ENCODE measurements at regions of chr14 and their contacts with region 1.

Region 1: DNA sequence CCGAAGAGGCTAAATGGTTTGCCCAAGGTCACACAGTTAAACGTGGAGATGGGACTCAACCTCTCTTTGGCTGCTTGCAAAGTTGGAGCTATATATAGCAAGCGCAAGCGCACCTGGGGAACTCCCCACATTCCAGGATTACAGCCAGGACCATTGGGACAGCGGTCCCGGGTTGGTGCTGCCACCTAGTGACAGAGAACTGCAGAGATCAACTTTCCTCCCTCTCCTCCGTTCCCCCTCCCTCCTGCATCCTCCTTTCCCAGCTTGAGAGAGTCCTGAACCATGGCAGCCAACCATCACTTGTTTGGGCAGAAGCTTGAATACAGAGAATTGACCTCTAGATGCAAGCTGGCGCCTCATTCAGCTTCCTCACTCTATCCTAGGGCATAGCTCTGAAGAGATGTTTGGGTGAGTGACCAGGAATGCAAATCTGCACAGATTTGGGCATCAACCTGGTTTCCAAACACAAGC is 17.4 kb upstream of the FLVCR2 start:
- DNase-seq: peak; percentile 21 to 68 (median 33)
- H3K4me3 ChIP-seq: no peak overlapping the region
- H3K4me3 Mint-ChIP-seq: peak overlapping the region in 1 of 7 donors; percentile 33
- H3K27ac ChIP-seq: no peak overlapping the region
- H3K27ac Mint-ChIP-seq: peak overlapping the region in 4 of 8 donors; percentile 22 to 78 (median 46)
- H3K4me1 ChIP-seq: peaks cover 10% of the 10 kb centered on the region
- H3K4me1 Mint-ChIP-seq: peaks cover 14 to 33% (median 27%) of the 10 kb centered on the region in 3 donors
- H3K27me3 ChIP-seq: no peaks in the 10 kb centered on the region
- H3K27me3 Mint-ChIP-seq: peaks cover 0 to 1% of the 10 kb centered on the region in 2 donors

Region 2: GRCh38 chr14:75176142-75176820 is 384.7 kb before region 1 on chr14 and contains the start of gene TMED10:
- CTCF ChIA-PET with region 1: no interaction called
- POLR2A ChIA-PET with region 1: no interaction called
- DNase-seq: peak; percentile 87 to 95 (median 94)
- H3K4me3 ChIP-seq: peak within 1 kb of the TSS; percentile 87
- H3K4me3 Mint-ChIP-seq: peak within 1 kb of the TSS; percentile 86 to 98 (median 90)
- H3K27ac ChIP-seq: peak within 1 kb of the TSS; percentile 98
- H3K27ac Mint-ChIP-seq: peak within 1 kb of the TSS; percentile 97 to 100 (median 98)
- H3K4me1 ChIP-seq: peaks cover 24% of the 10 kb centered on the region
- H3K4me1 Mint-ChIP-seq: peaks cover 32 to 55% (median 53%) of the 10 kb centered on the region in 3 donors
- H3K27me3 ChIP-seq: no peaks in the 10 kb centered on the region
- H3K27me3 Mint-ChIP-seq: no peaks in the 10 kb centered on the region
- total RNA-seq, gene TMED10: 178 TPM

Region 3: DNA sequence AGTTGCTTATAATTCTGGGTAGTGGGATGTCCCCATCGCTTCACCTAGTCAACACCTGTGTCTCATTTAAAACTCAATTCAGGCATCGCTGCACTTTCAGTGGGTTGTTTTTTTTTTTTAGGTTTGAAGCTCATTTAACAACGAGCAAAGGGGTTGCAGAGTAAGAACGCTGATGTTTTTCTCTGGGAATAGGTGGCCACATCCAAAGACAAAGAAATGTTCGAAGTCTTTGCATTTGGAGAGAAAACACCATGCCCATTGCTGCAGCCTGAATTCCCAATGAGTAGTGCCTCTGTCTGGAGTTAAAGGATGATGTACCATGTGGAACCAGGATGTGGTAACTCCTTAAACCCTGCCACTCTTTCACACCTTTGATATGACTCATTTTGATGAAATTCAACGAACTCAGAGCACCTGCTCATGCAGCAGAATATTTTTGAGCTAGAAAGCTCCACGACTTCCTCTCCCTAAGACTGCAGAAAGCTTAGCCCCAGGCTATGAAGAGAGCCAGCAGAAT is 73.8 kb before region 1 on chr14:
- CTCF ChIA-PET with region 1: interaction called, 20 read pairs
- POLR2A ChIA-PET with region 1: no interaction called
- DNase-seq: peak in 1 of 5 donors; percentile 22
- H3K4me3 ChIP-seq: no peak overlapping the region
- H3K4me3 Mint-ChIP-seq: peak overlapping the region in 6 of 7 donors; percentile 4 to 65 (median 20)
- H3K27ac ChIP-seq: no peak overlapping the region
- H3K27ac Mint-ChIP-seq: peak overlapping the region in 5 of 8 donors; percentile 24 to 70 (median 36)
- H3K4me1 ChIP-seq: peaks cover 7% of the 10 kb centered on the region
- H3K4me1 Mint-ChIP-seq: peaks cover 12 to 24% (median 22%) of the 10 kb centered on the region in 3 donors
- H3K27me3 ChIP-seq: no peaks in the 10 kb centered on the region
- H3K27me3 Mint-ChIP-seq: peaks cover 0 to 1% of the 10 kb centered on the region in 2 donors

Region 4: DNA sequence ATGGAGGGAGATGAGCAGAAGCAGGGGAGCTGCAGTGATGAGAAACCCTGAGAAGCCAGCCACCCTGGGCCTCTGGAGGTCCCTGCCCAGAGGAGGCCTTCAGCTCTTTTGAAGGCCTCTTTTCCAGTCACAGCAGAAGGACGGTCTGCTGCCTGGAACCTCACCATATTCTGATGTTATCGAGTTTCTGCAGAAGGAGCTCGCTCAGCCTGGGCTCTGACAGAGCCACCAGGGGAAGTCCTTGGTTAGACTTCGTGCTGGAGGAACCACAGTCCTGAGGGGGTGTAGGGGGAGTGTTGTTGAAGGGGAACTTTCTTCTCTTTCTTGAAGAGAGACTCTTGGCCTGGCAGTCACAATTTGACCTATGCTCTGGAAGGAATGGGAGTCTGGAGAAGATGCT is 63.8 kb before region 1 on chr14:
- CTCF ChIA-PET with region 1: interaction called, 15 read pairs
- POLR2A ChIA-PET with region 1: no interaction called
- DNase-seq: peak in 1 of 5 donors; percentile 59
- H3K4me3 ChIP-seq: no peak overlapping the region
- H3K4me3 Mint-ChIP-seq: peak overlapping the region in 1 of 7 donors; percentile 45
- H3K27ac ChIP-seq: no peak overlapping the region
- H3K27ac Mint-ChIP-seq: peak overlapping the region in 5 of 8 donors; percentile 12 to 97 (median 70)
- H3K4me1 ChIP-seq: peaks cover 7% of the 10 kb centered on the region
- H3K4me1 Mint-ChIP-seq: peaks cover 7 to 35% (median 32%) of the 10 kb centered on the region in 3 donors
- H3K27me3 ChIP-seq: no peaks in the 10 kb centered on the region
- H3K27me3 Mint-ChIP-seq: no peaks in the 10 kb centered on the region

Region 5: GRCh38 chr14:75514673-75515628 is 46.0 kb before region 1 on chr14:
- CTCF ChIA-PET with region 1: interaction called, 43 read pairs
- POLR2A ChIA-PET with region 1: no interaction called
- DNase-seq: peak; percentile 33 to 77 (median 52)
- H3K4me3 ChIP-seq: peak overlapping the region; percentile 45
- H3K4me3 Mint-ChIP-seq: peak overlapping the region; percentile 83 to 99 (median 87)
- H3K27ac ChIP-seq: peak overlapping the region; percentile 62
- H3K27ac Mint-ChIP-seq: peak overlapping the region; percentile 92 to 100 (median 97)
- H3K4me1 ChIP-seq: peaks cover 28% of the 10 kb centered on the region
- H3K4me1 Mint-ChIP-seq: peaks cover 36 to 52% (median 49%) of the 10 kb centered on the region in 3 donors
- H3K27me3 ChIP-seq: no peaks in the 10 kb centered on the region
- H3K27me3 Mint-ChIP-seq: no peaks in the 10 kb centered on the region

Region 6: GRCh38 chr14:75522224-75522982 is 38.6 kb before region 1 on chr14 and contains the start of gene BATF:
- CTCF ChIA-PET with region 1: interaction called, 43 read pairs
- POLR2A ChIA-PET with region 1: no interaction called
- DNase-seq: peak; percentile 52 to 84 (median 72)
- H3K4me3 ChIP-seq: peak within 1 kb of the TSS; percentile 91
- H3K4me3 Mint-ChIP-seq: peak within 1 kb of the TSS; percentile 96 to 100 (median 99)
- H3K27ac ChIP-seq: peak within 1 kb of the TSS; percentile 66
- H3K27ac Mint-ChIP-seq: peak within 1 kb of the TSS; percentile 93 to 99 (median 97)
- H3K4me1 ChIP-seq: peaks cover 60% of the 10 kb centered on the region
- H3K4me1 Mint-ChIP-seq: peaks cover 65 to 82% (median 77%) of the 10 kb centered on the region in 3 donors
- H3K27me3 ChIP-seq: no peaks in the 10 kb centered on the region
- H3K27me3 Mint-ChIP-seq: no peaks in the 10 kb centered on the region
- total RNA-seq, gene BATF: 165 to 172 TPM

Region 7: GRCh38 chr14:75542588-75543091 is 18.4 kb before region 1 on chr14:
- CTCF ChIA-PET with region 1: interaction called, 17 read pairs
- POLR2A ChIA-PET with region 1: no interaction called
- DNase-seq: peak; percentile 48 to 84 (median 60)
- H3K4me3 ChIP-seq: peak overlapping the region; percentile 52
- H3K4me3 Mint-ChIP-seq: peak overlapping the region; percentile 72 to 89 (median 79)
- H3K27ac ChIP-seq: peak overlapping the region; percentile 70
- H3K27ac Mint-ChIP-seq: peak overlapping the region; percentile 95 to 98 (median 97)
- H3K4me1 ChIP-seq: peaks cover 58% of the 10 kb centered on the region
- H3K4me1 Mint-ChIP-seq: peaks cover 59 to 78% (median 76%) of the 10 kb centered on the region in 3 donors
- H3K27me3 ChIP-seq: no peaks in the 10 kb centered on the region
- H3K27me3 Mint-ChIP-seq: no peaks in the 10 kb centered on the region

Region 8: GRCh38 chr14:75577729-75578101 is 16.7 kb after region 1 on chr14:
- CTCF ChIA-PET with region 1: interaction called, 40 read pairs
- POLR2A ChIA-PET with region 1: no interaction called
- DNase-seq: peak; percentile 52 to 78 (median 54)
- H3K4me3 ChIP-seq: peak overlapping the region; percentile 66
- H3K4me3 Mint-ChIP-seq: peak overlapping the region; percentile 89 to 99 (median 95)
- H3K27ac ChIP-seq: peak overlapping the region; percentile 21
- H3K27ac Mint-ChIP-seq: peak overlapping the region; percentile 5 to 96 (median 88)
- H3K4me1 ChIP-seq: peaks cover 9% of the 10 kb centered on the region
- H3K4me1 Mint-ChIP-seq: peaks cover 9 to 20% (median 9%) of the 10 kb centered on the region in 3 donors
- H3K27me3 ChIP-seq: no peaks in the 10 kb centered on the region
- H3K27me3 Mint-ChIP-seq: no peaks in the 10 kb centered on the region

Measured in CD8-positive, alpha-beta memory T cell (primary cell).